ENCODE measurements at regions of chr3 and their contacts with region 1.

Region 1: DNA sequence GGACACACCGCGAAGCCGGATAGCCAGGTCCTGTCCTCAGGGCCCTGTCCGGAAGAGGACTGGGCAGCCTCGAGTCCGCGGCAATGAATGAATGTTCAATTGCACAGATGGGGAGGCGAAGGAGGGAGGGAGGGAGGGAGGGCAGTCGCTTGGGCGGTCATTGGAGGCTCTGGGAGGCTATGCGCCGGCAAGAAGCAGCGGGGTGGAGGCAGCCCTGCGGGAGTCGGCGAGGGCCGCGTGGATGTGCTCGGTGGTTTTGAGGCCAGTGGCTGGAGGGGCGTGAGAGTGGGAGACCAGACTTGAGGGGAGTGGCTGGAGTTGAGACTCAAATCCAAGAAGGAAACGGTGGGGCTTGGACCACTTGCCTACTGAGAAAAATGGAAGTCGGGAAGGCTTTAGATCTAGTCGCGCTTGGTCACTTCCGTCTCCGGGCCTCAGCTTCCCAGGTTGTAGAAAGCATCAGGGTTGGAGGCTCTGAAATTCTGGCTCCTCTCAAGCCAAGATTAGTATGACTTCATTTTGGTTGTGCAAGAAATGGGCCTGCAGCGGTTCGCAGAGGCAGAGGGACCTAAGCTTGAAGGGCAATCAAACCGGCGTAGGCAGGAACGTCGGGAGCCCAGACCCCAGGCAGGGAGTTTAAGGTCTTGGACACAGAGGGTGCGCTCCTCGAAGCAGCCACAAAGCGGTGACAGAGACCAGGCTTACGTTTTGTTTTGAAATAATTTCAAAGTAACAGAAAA is 21.1 kb upstream of the PLXND1 start:
- DNase-seq: peak; percentile 73
- H3K4me3 ChIP-seq: peak overlapping the region; percentile 31 to 56 (median 43)
- H3K27ac ChIP-seq: peak overlapping the region; percentile 41
- H3K4me1 ChIP-seq: peaks cover 25% of the 10 kb centered on the region
- H3K27me3 ChIP-seq: no peaks in the 10 kb centered on the region
- CTCF ChIP-seq: peak; percentile 75 to 82

Region 2: GRCh38 chr3:129383292-129383860 is 244.2 kb before region 1 on chr3:
- CTCF ChIA-PET with region 1: no interaction called
- dilution Hi-C with region 1: no loop called
- in situ Hi-C with region 1: no loop called
- intact Hi-C with region 1: loop called (anchors 2 kb)
- DNase-seq: peak; percentile 49
- H3K4me3 ChIP-seq: no peak overlapping the region
- H3K27ac ChIP-seq: no peak overlapping the region
- H3K4me1 ChIP-seq: no peaks in the 10 kb centered on the region
- H3K27me3 ChIP-seq: no peaks in the 10 kb centered on the region
- CTCF ChIP-seq: peak; percentile 69 to 81

Region 3: DNA sequence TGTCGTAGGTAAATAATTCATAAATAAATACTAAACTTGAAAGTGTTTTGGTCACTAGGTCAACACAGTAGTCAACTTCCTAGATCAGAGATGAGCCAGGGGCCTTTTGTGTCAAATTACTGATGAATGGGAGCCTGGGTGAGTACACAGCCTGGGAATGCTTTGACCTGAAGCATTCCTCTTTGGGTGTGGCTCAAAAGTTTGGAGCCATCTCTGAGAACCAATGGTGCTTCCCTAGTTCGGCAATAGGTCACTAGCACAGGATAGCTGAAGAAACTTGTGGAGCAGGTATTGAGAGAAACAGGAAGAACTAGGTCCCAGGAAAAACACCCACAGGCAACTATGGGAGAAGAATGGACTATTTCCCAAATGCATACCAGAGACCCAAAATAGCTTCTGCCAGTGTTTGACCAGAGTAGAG is 35.4 kb after region 1 on chr3:
- CTCF ChIA-PET with region 1: no interaction called
- dilution Hi-C with region 1: no loop called
- in situ Hi-C with region 1: no loop called
- intact Hi-C with region 1: no loop called
- DNase-seq: peak; percentile 91
- H3K4me3 ChIP-seq: no peak overlapping the region
- H3K27ac ChIP-seq: peak overlapping the region; percentile 94
- H3K4me1 ChIP-seq: peaks cover 49% of the 10 kb centered on the region
- H3K27me3 ChIP-seq: no peaks in the 10 kb centered on the region
- CTCF ChIP-seq: no peak

Region 4: GRCh38 chr3:129824926-129825541 is 197.4 kb after region 1 on chr3:
- CTCF ChIA-PET with region 1: no interaction called
- dilution Hi-C with region 1: no loop called
- in situ Hi-C with region 1: no loop called
- intact Hi-C with region 1: loop called (anchors 1 kb)
- DNase-seq: peak; percentile 29
- H3K4me3 ChIP-seq: no peak overlapping the region
- H3K27ac ChIP-seq: no peak overlapping the region
- H3K4me1 ChIP-seq: peaks cover 5% of the 10 kb centered on the region
- H3K27me3 ChIP-seq: no peaks in the 10 kb centered on the region
- CTCF ChIP-seq: peak; percentile 52 to 70

Region 5: GRCh38 chr3:129934234-129935123 is 306.9 kb after region 1 on chr3:
- CTCF ChIA-PET with region 1: no interaction called
- dilution Hi-C with region 1: loop called (anchors 10 kb)
- in situ Hi-C with region 1: loop called in 1 of 2 experiments (anchors 10 kb)
- intact Hi-C with region 1: loop called (anchors 1 kb)
- DNase-seq: no peak
- H3K4me3 ChIP-seq: no peak overlapping the region
- H3K27ac ChIP-seq: no peak overlapping the region
- H3K4me1 ChIP-seq: no peaks in the 10 kb centered on the region
- H3K27me3 ChIP-seq: no peaks in the 10 kb centered on the region
- CTCF ChIP-seq: peak; percentile 80 to 90

Region 6: GRCh38 chr3:130093741-130094391 is 466.3 kb after region 1 on chr3:
- CTCF ChIA-PET with region 1: no interaction called
- dilution Hi-C with region 1: no loop called
- in situ Hi-C with region 1: loop called in 1 of 2 experiments (anchors 25 kb)
- intact Hi-C with region 1: loop called (anchors 10 kb)
- DNase-seq: no peak
- H3K4me3 ChIP-seq: no peak overlapping the region
- H3K27ac ChIP-seq: no peak overlapping the region
- H3K4me1 ChIP-seq: peaks cover 10% of the 10 kb centered on the region
- H3K27me3 ChIP-seq: no peaks in the 10 kb centered on the region
- CTCF ChIP-seq: no peak